Heart left ventricle (tissue), 16 donors: ENCODE measurements at regions of chr11 and their contacts with region 1.

Region 1: GRCh38 chr11:31810779-31811647 is at the start of gene PAX6:
- DNase-seq: peak in 1 of 5 donors; percentile 36
- ATAC-seq: peak in 2 of 4 donors; percentile 38 to 39
- H3K4me3 ChIP-seq: peak within 1 kb of the TSS; percentile 31 to 55 (median 42)
- H3K27ac ChIP-seq: no peak within 1 kb of the TSS
- H3K4me1 ChIP-seq: peaks cover 11 to 71% (median 50%) of the 10 kb centered on the region in 12 donors
- H3K27me3 ChIP-seq: peaks cover 80 to 100% (median 98%) of the 10 kb centered on the region in 9 donors
- CTCF ChIP-seq: no peak
- POLR2A ChIP-seq: no peak
- total RNA-seq, gene PAX6: 0.09 to 0.50 (median 0.27) TPM in 3 of 9 donors, not detected in the others

Region 2: GRCh38 chr11:31725176-31725575 is 85.8 kb before region 1 on chr11:
- intact Hi-C with region 1: no loop called
- DNase-seq: no peak
- ATAC-seq: no peak
- H3K4me3 ChIP-seq: no peak overlapping the region
- H3K27ac ChIP-seq: no peak overlapping the region
- H3K4me1 ChIP-seq: no peaks in the 10 kb centered on the region
- H3K27me3 ChIP-seq: no peaks in the 10 kb centered on the region
- CTCF ChIP-seq: no peak
- POLR2A ChIP-seq: no peak

Region 3: GRCh38 chr11:31870609-31871309 is 59.7 kb after region 1 on chr11:
- intact Hi-C with region 1: loop called in 1 of 10 experiments (anchors 10 kb)
- DNase-seq: peak in 4 of 5 donors; percentile 13 to 39 (median 34)
- ATAC-seq: peak in 3 of 4 donors; percentile 45 to 67 (median 50)
- H3K4me3 ChIP-seq: no peak overlapping the region
- H3K27ac ChIP-seq: no peak overlapping the region
- H3K4me1 ChIP-seq: peaks cover 0 to 5% (median 0%) of the 10 kb centered on the region in 12 donors
- H3K27me3 ChIP-seq: peaks cover 0 to 55% (median 6%) of the 10 kb centered on the region in 9 donors
- CTCF ChIP-seq: peak; percentile 39 to 71 (median 62)
- POLR2A ChIP-seq: no peak